GM12878 (cell line): ENCODE measurements at regions of chr16 and their contacts with region 1.

Region 1: DNA sequence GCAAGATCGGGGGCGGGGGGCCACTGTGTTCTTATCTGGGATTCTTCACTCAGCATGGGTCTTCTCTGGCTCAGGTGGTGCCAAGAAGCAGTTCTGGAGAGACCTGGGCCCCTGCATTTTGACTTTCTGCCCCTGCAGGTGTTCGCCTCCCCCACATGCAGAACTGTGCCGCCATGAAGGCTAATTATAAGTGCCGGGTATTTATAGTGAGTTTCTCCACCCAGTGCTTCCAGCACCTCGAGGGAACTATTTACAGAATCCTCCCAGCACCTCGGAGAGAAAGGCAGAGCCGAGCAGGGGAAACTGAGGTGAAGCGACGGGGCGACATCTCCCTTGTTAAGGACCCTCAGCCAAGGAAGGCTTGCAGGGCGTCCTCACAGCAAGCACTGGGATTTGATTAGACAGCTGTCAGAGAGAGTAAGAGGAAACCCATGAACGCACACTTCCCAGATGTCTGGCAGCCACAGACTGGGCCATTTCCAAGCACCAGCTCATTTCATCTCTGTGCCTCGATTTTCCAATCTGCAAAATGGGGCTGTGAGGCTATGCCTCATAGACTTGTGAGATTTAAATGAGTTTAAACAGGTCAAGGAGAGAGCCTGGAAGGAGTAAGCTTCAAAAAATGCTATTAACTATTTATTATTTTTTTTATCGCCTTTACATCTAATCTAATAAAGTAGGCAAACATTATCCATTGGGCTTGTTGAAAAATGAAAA is 36.4 kb upstream of the GRIN2A start:
- DNase-seq: no peak
- ATAC-seq: no peak
- H3K4me3 ChIP-seq: no peak overlapping the region
- H3K27ac ChIP-seq: no peak overlapping the region
- H3K4me1 ChIP-seq: no peaks in the 10 kb centered on the region
- H3K27me3 ChIP-seq: no peaks in the 10 kb centered on the region
- CTCF ChIP-seq: no peak
- EP300 ChIP-seq: no peak
- POLR2A ChIP-seq: no peak
- RAD21 ChIP-seq: no peak

Region 2: GRCh38 chr16:8859899-8860881 is 1358.5 kb before region 1 on chr16:
- CTCF ChIA-PET with region 1: no interaction called
- POLR2A ChIA-PET with region 1: interaction called, 10 read pairs
- RAD21 ChIA-PET with region 1: no interaction called
- SMC1A ChIA-PET with region 1: no interaction called
- in situ Hi-C with region 1: no loop called
- intact Hi-C with region 1: no loop called
- DNase-seq: no peak
- ATAC-seq: peak; percentile 12; the same call in 1 of the 3 replicates
- H3K4me3 ChIP-seq: no peak overlapping the region
- H3K27ac ChIP-seq: no peak overlapping the region
- H3K4me1 ChIP-seq: peaks cover 6% of the 10 kb centered on the region; the same call in 1 of the 2 replicates
- H3K27me3 ChIP-seq: no peaks in the 10 kb centered on the region
- CTCF ChIP-seq: no peak
- EP300 ChIP-seq: no peak
- POLR2A ChIP-seq: peak; percentile 51; the same call in 1 of the 2 replicates
- RAD21 ChIP-seq: no peak

Region 3: DNA sequence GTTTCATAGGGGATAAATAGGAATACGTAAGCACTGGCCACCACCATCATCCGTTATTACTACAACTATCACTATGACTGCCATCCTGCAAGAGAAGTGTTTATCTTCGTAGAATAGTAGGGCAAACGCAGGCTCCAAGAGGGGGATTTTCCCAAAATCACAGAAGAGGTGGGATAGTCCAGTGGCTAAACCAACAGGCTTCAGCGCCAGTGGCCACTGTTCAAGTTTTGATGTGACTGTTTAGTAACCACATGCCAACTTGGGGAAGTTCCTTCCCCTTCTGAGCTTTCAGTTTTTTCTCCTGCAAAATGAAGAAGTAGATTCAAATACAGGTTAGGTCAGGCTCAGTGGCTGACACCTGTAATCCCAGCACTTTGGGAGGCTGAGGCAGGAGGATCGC is 24.3 kb after region 1 on chr16:
- CTCF ChIA-PET with region 1: no interaction called
- POLR2A ChIA-PET with region 1: no interaction called
- RAD21 ChIA-PET with region 1: no interaction called
- SMC1A ChIA-PET with region 1: no interaction called
- in situ Hi-C with region 1: no loop called
- intact Hi-C with region 1: no loop called
- DNase-seq: peak; percentile 53
- ATAC-seq: peak; percentile 93
- H3K4me3 ChIP-seq: no peak overlapping the region
- H3K27ac ChIP-seq: no peak overlapping the region
- H3K4me1 ChIP-seq: peaks cover 5% of the 10 kb centered on the region; the same call in 1 of the 2 replicates
- H3K27me3 ChIP-seq: no peaks in the 10 kb centered on the region
- CTCF ChIP-seq: no peak
- EP300 ChIP-seq: peak in 1 of 2 experiments; percentile 88; a peak in 2 of 4 replicates
- POLR2A ChIP-seq: no peak
- RAD21 ChIP-seq: no peak

Region 4: GRCh38 chr16:10729104-10730048 is 510.7 kb after region 1 on chr16:
- CTCF ChIA-PET with region 1: no interaction called
- POLR2A ChIA-PET with region 1: no interaction called
- RAD21 ChIA-PET with region 1: no interaction called
- SMC1A ChIA-PET with region 1: no interaction called
- in situ Hi-C with region 1: no loop called
- intact Hi-C with region 1: no loop called
- DNase-seq: no peak
- ATAC-seq: no peak
- H3K4me3 ChIP-seq: no peak overlapping the region
- H3K27ac ChIP-seq: no peak overlapping the region
- H3K4me1 ChIP-seq: no peaks in the 10 kb centered on the region
- H3K27me3 ChIP-seq: no peaks in the 10 kb centered on the region
- CTCF ChIP-seq: no peak
- EP300 ChIP-seq: no peak
- POLR2A ChIP-seq: no peak
- RAD21 ChIP-seq: no peak

Region 5: DNA sequence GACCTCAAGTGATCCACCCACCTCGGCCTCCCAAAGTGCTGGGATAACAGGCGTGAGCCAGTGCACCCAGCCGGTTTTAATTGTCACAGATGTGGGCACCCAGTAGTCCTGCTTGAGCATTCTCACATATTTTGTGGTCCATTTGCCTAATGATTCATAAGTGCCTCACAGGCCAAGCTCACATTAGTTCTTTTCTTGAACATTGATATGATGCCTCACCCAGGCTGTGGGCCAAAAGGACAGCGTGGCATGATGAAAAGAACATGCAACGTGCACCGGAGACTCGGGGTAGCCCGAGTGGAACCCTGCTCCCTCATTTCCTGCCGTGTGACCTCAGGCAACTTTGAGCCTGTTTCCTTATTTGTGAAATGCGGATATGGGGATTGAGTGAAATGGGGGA is 1939.8 kb after region 1 on chr16:
- CTCF ChIA-PET with region 1: no interaction called
- POLR2A ChIA-PET with region 1: no interaction called
- RAD21 ChIA-PET with region 1: no interaction called
- SMC1A ChIA-PET with region 1: no interaction called
- in situ Hi-C with region 1: no loop called
- intact Hi-C with region 1: no loop called
- DNase-seq: no peak
- ATAC-seq: no peak
- H3K4me3 ChIP-seq: no peak overlapping the region
- H3K27ac ChIP-seq: no peak overlapping the region
- H3K4me1 ChIP-seq: peaks cover 9% of the 10 kb centered on the region
- H3K27me3 ChIP-seq: no peaks in the 10 kb centered on the region
- CTCF ChIP-seq: no peak
- EP300 ChIP-seq: no peak
- POLR2A ChIP-seq: no peak
- RAD21 ChIP-seq: no peak